ENCODE measurements at regions of chr9 and their contacts with region 1.

Region 1: GRCh38 chr9:116656501-116656971 is 30.6 kb upstream of the TRIM32 start:
- DNase-seq: no peak
- ATAC-seq: no peak
- H3K4me3 ChIP-seq: no peak overlapping the region
- H3K27ac ChIP-seq: no peak overlapping the region
- H3K4me1 ChIP-seq: peaks cover 0 to 5% of the 10 kb centered on the region in 2 donors
- H3K27me3 ChIP-seq: no peaks in the 10 kb centered on the region
- CTCF ChIP-seq: no peak

Region 2: GRCh38 chr9:115591584-115591984 is 1065.0 kb before region 1 on chr9:
- intact Hi-C with region 1: loop called in 1 of 2 experiments (anchors 10 kb)
- DNase-seq: peak in 2 of 4 donors; percentile 62 to 90
- ATAC-seq: peak; percentile 95
- H3K4me3 ChIP-seq: no peak overlapping the region
- H3K27ac ChIP-seq: peak overlapping the region in 1 of 2 donors; percentile 65
- H3K4me1 ChIP-seq: peaks cover 0 to 3% of the 10 kb centered on the region in 2 donors
- H3K27me3 ChIP-seq: peaks cover 4 to 16% of the 10 kb centered on the region in 2 donors
- CTCF ChIP-seq: peak; percentile 36 to 72

Region 3: DNA sequence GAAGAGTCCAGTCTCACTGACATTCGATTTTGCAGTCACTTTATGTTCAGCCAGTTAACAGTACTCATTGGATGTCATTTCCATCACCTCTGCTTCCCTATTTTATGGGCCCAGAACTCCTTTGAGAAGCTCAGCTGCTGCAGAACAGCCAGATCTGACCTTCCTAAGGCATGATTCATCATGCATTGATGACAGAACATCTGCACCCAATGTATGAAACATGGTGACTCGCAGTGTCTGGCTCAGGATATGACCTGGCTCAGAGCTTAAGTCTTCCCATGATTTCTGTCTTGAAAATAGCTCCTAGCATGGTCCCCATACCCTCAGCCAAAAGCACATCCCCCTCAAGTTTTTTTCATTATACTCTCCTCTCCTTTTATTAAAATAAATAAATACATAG is 62.0 kb before region 1 on chr9:
- intact Hi-C with region 1: no loop called
- DNase-seq: no peak
- ATAC-seq: peak; percentile 15
- H3K4me3 ChIP-seq: no peak overlapping the region
- H3K27ac ChIP-seq: no peak overlapping the region
- H3K4me1 ChIP-seq: no peaks in the 10 kb centered on the region
- H3K27me3 ChIP-seq: no peaks in the 10 kb centered on the region
- CTCF ChIP-seq: no peak

Measured in left lung (tissue), 14 donors.